HEK293T (cell line): ENCODE measurements at regions of chr17 and their contacts with region 1.

Region 1: GRCh38 chr17:2380950-2381649 is 19.8 kb downstream of the MNT start:
- DNase-seq: no peak

Region 2: DNA sequence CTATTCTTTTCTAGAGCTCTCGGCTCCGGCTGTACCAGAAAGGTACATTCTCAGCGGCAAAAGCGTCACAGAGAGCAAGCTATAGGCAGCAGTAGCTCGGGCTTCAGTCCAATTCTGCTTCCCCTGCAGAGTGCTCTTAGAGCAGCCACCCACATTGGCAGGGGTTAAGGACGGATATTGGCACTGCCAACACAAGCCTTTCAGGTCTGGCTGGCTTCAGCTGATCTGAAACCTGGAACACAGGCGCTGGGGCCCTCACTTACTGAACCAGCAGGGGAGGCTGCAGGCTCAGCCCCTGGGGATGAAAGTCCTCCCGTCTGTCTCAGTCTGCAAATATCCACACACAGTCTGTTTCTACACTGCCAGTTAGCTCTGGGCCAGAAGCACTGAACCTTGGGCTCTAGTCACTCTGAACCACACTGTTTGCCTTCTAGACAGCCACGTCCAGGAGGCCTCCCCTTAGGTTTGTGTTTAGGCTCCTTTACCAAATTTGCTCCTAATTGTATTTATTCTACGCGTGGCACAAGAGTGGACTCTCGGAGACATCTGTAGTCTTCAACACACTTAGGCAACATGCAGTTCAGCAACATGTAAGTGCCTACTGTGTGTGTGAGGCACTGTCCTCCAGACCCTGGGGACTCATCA is 286.1 kb before region 1 on chr17:
- CTCF ChIA-PET with region 1: no interaction called
- POLR2A ChIA-PET with region 1: no interaction called
- DNase-seq: no peak

Region 3: DNA sequence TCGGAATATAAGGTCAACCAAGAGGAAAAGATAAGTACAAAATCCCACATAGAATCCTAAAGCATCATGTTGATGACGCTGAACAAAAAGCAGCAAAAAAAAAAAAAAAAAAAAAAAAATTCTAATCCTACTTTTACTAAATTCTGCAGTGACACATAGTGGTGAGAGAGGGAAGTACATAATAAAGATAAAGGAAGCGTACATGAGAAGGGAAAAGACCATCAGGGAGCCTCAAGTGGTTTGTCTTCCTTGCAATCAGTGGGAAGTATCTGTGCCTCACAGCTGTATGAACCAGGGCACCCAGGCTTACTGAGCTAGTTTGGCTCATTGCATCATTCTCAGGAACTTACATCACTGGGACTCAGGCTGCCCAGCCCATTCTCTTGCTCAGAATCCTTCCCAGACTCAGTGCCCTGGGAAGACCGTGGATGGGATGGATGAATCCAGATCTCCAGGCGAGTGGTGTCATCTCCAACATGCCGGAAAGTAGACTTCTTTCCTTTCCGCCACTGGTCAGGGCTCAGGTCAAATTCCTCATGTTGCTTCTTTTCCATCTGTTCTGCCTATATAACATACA is 98.7 kb before region 1 on chr17:
- CTCF ChIA-PET with region 1: no interaction called
- POLR2A ChIA-PET with region 1: no interaction called
- DNase-seq: peak; percentile 46

Region 4: GRCh38 chr17:2369551-2370210 is 11.4 kb before region 1 on chr17:
- CTCF ChIA-PET with region 1: interaction called, 12 read pairs
- POLR2A ChIA-PET with region 1: interaction called, 3 read pairs
- DNase-seq: peak; percentile 25